Activated B cell treated with CpG ODN at 0.5 μM for 24 hours (primary cell): ENCODE measurements at regions of chr5 and their contacts with region 1.

Region 1: DNA sequence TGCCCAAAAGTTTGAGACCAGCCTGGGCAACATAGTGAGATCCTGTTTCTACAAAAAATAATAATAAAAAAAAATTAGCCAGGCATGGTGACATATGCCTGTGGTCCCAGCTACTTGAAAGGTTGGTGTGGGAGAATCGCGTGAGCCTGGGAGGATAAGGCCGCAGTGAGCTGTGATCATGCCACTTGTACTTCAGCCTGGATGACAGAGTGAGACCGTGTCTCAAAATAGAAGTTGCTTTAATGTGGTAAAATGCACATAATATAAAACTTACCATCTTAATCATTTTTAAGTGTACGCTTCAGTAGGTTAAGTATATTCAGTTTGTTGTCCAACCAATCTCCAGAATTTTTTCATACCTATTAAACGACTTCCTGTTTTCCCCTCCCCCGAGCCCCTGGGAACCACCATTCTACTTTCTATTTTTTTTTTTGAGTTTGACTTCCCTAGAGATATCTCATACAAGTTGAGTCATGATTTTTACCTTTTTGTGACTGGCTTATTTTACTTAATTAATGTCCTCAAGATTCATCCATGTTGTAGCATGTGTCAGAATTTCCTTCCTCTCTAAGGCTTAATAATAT is 120.1 kb upstream of the POC5 start:
- DNase-seq: no peak
- ATAC-seq: peak; percentile 52
- H3K4me3 Mint-ChIP-seq: peak overlapping the region; percentile 37
- H3K27ac Mint-ChIP-seq: no peak overlapping the region
- H3K4me1 Mint-ChIP-seq: peaks cover 15% of the 10 kb centered on the region
- H3K27me3 Mint-ChIP-seq: no peaks in the 10 kb centered on the region
- CTCF ChIP-seq: no peak

Region 2: GRCh38 chr5:75847561-75848021 is 10.2 kb after region 1 on chr5:
- CTCF ChIA-PET with region 1: no interaction called
- POLR2A ChIA-PET with region 1: interaction called, 8 read pairs
- intact Hi-C with region 1: loop called (anchors 1 kb)
- DNase-seq: no peak
- ATAC-seq: peak; percentile 89
- H3K4me3 Mint-ChIP-seq: peak overlapping the region; percentile 50
- H3K27ac Mint-ChIP-seq: peak overlapping the region; percentile 82
- H3K4me1 Mint-ChIP-seq: peaks cover 45% of the 10 kb centered on the region
- H3K27me3 Mint-ChIP-seq: no peaks in the 10 kb centered on the region
- CTCF ChIP-seq: no peak

Region 3: DNA sequence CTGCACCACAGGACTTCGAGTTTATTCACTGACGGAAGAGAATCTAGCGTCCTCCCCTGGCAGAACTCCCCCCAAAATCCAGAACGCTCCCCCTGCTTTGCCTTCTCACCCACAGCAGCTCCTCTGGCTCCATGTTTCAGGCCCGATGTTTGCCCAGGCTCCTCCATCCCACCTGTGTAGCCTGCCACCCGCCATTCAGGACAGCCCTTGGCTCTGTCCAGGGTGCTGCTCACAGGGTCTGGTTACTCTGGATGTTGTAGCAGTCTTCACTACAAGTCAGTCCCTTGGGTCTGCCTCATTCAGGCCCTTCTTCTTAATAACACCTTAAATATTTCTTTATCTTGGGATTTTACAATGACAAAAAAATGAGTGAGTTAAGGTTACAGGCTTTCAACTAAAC is 204.5 kb after region 1 on chr5:
- CTCF ChIA-PET with region 1: no interaction called
- POLR2A ChIA-PET with region 1: no interaction called
- intact Hi-C with region 1: no loop called
- DNase-seq: no peak
- ATAC-seq: no peak
- H3K4me3 Mint-ChIP-seq: no peak overlapping the region
- H3K27ac Mint-ChIP-seq: no peak overlapping the region
- H3K4me1 Mint-ChIP-seq: peaks cover 6% of the 10 kb centered on the region
- H3K27me3 Mint-ChIP-seq: peaks cover 32% of the 10 kb centered on the region
- CTCF ChIP-seq: no peak